ENCODE measurements at regions of chr1 and their contacts with region 1.

Region 1: DNA sequence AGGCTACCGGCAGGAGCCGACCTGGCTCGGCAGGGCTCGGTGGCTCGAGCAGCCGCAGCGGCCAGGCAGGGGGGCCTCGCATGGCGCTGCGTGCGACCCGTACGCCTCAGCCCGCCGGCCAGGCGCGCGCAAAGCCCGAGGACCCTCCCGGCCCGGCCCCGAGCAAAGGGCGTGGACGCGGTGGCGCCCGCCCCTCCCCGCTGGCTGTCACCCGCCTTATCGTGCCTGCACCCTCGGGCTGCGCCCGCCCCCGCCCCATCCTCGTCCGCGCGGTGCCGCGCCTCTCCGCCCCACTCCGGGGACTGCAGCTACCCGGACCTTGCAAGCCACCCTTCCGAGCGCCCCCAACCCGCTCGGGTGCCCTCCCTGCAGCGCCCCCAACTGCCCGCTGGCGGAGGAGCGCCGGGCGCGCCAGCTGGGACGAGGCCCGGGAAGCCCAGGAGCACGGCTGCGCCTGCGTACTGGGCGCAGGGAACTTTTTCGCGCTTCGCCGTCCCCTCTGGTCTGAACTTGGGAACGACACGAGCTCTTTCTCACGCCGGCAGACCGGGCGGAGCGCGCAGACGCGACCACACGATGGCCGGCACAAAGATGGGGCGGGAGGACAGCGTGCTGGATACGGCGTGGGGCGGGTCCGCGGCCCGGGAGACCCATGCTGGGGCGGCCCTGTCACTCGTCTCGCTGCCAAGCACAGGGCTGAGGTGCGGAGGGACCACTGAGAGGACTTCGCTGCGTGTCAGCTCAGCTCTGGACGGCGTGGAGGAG is at the start of gene ABCB10:
- DNase-seq: peak; percentile 93 to 96
- ATAC-seq: peak; percentile 92
- H3K4me3 ChIP-seq: peak within 1 kb of the TSS; percentile 76 to 95 (median 86)
- H3K27ac ChIP-seq: peak within 1 kb of the TSS; percentile 85 to 95 (median 90)
- H3K4me1 ChIP-seq: peaks cover 39 to 48% of the 10 kb centered on the region in 2 donors
- H3K27me3 ChIP-seq: no peaks in the 10 kb centered on the region
- CTCF ChIP-seq: peak; percentile 68 to 81 (median 80)
- POLR2A ChIP-seq: peak; percentile 72 to 73
- total RNA-seq, gene ABCB10: 14.5 to 29.9 (median 19.3) TPM

Region 2: GRCh38 chr1:229249854-229250644 is 308.7 kb before region 1 on chr1:
- in situ Hi-C with region 1: no loop called
- intact Hi-C with region 1: no loop called
- DNase-seq: no peak
- ATAC-seq: no peak
- H3K4me3 ChIP-seq: no peak overlapping the region
- H3K27ac ChIP-seq: no peak overlapping the region
- H3K4me1 ChIP-seq: no peaks in the 10 kb centered on the region
- H3K27me3 ChIP-seq: no peaks in the 10 kb centered on the region
- CTCF ChIP-seq: no peak
- POLR2A ChIP-seq: no peak

Region 3: DNA sequence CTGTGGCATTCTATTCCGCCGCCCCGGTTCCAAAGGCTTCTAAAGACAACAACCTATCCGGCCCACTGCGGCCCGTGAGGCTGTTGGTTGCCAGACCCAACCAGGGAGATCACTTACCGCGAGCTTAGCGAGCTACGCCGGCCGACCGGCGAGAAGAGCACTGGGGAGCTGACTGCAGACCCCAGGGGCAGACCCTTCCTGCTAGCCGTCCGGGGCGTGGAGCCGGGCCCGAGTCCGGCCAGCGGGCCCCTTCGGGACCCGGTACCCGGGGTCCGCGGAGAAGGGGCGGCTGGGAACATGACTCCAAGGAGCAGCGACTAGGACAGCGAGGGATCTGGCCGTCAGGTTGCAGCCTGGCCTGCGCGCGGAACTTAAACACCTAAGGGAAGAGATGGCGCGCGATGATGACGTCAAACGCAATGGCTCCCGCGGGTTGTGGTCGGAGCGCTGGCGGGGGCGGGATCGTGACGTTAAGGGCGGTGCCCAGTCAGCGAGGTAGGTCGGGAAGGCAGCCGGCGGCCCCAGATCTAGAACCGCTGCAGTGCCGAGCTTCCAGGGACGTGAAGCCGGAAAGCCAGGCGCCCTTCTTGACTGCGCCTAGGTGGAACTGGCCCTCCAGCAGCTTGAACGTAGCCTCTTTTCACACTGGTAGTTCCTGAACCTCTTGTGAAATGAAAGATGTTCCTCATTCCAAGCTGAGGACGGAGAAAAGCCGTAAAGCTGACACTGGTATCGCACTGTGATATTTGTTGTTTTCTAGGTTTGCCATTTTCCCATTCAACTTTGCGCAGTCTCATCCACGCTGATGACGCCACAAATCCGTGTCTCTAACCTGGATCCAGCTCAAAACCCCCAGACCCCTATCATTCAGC is 50.6 kb before region 1 on chr1 and contains the start of gene NUP133:
- in situ Hi-C with region 1: no loop called
- intact Hi-C with region 1: loop called (anchors 1 kb)
- DNase-seq: peak; percentile 98
- ATAC-seq: peak; percentile 96
- H3K4me3 ChIP-seq: peak within 1 kb of the TSS; percentile 82 to 91 (median 89)
- H3K27ac ChIP-seq: peak within 1 kb of the TSS; percentile 88 to 96 (median 94)
- H3K4me1 ChIP-seq: peaks cover 18 to 21% of the 10 kb centered on the region in 2 donors
- H3K27me3 ChIP-seq: no peaks in the 10 kb centered on the region
- CTCF ChIP-seq: no peak
- POLR2A ChIP-seq: peak; percentile 74 to 85
- total RNA-seq, gene NUP133: 18.4 to 30.8 (median 23.7) TPM

Region 4: GRCh38 chr1:229619614-229620013 is 60.9 kb after region 1 on chr1:
- in situ Hi-C with region 1: loop called in 3 of 4 experiments (anchors 5 to 10 kb)
- intact Hi-C with region 1: no loop called
- DNase-seq: no peak
- ATAC-seq: no peak
- H3K4me3 ChIP-seq: no peak overlapping the region
- H3K27ac ChIP-seq: no peak overlapping the region
- H3K4me1 ChIP-seq: peaks cover 39 to 52% of the 10 kb centered on the region in 2 donors
- H3K27me3 ChIP-seq: no peaks in the 10 kb centered on the region
- CTCF ChIP-seq: no peak
- POLR2A ChIP-seq: no peak

Region 5: GRCh38 chr1:229848752-229849677 is 290.3 kb after region 1 on chr1:
- in situ Hi-C with region 1: no loop called
- intact Hi-C with region 1: loop called (anchors 10 kb)
- DNase-seq: no peak
- ATAC-seq: no peak
- H3K4me3 ChIP-seq: no peak overlapping the region
- H3K27ac ChIP-seq: no peak overlapping the region
- H3K4me1 ChIP-seq: peaks cover 17 to 20% of the 10 kb centered on the region in 2 donors
- H3K27me3 ChIP-seq: no peaks in the 10 kb centered on the region
- CTCF ChIP-seq: peak in 3 of 5 experiments; percentile 16 to 48 (median 40)
- POLR2A ChIP-seq: no peak

Region 6: DNA sequence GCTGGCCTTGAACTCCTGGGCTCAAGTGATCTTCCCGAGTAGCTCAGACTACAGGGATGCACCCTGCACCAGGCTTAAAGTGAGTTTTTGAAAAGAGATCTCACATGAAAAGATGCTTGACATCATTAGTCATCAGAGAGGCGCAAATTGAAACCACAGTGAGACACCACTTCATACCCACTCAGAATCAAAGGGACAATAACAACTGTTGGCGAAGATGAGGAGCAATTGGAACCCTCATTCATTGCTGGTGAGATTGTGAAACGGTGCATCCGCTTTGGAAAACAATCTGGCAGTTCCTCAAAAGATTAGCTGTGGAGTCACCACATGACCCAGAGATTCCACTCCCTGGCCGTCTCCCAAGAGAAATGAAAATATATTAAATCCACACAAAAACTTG is 745.1 kb after region 1 on chr1:
- in situ Hi-C with region 1: no loop called
- intact Hi-C with region 1: loop called (anchors 5 kb)
- DNase-seq: peak; percentile 31 to 34
- ATAC-seq: peak; percentile 82 to 92
- H3K4me3 ChIP-seq: no peak overlapping the region
- H3K27ac ChIP-seq: peak overlapping the region; percentile 41 to 71 (median 58)
- H3K4me1 ChIP-seq: peaks cover 10 to 20% of the 10 kb centered on the region in 2 donors
- H3K27me3 ChIP-seq: no peaks in the 10 kb centered on the region
- CTCF ChIP-seq: no peak
- POLR2A ChIP-seq: no peak